ENCODE measurements at regions of chr2 and their contacts with region 1.

Region 1: DNA sequence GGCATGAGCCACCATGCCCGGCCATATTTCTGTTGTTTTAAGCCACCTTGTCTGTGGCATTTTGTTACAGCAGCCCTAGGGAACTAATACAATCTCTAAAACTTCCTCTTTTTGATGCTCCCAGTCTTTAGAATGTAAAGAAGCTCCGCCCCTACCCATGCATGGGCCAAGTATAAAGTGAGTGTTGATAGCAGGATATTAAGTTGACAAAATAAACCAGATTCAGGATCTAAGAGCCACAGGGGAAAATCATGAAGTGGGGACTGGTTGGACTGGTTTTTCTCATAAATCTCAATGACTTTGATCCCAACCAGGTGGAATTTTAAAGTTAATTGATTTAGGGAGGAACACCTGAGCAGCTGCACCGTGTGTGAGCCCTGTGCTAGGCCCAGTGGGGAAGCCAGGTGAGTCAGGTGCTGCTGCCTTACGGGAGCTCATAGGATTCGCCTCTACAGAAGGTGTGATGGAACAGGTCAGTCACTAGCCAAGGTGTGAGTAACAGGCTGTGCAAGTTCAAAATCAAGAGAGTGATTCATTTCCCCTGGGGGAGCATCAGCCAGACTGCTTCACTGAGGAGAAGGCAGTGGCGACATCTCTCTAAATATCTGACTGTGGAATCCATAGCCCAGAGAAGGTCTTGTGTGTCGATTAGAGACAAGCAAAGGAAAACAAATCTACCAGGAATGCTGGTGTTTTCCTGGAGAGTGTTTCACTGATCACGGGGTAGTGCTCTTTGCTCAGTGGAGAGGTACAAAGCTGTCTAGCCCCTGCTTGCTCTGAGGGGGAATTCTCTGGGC is 63.0 kb upstream of the MSH2 start:
- DNase-seq: peak; percentile 81 to 100
- H3K4me3 ChIP-seq: peak overlapping the region; percentile 33; the same call in 1 of the 2 replicates
- H3K27ac ChIP-seq: peak overlapping the region; percentile 84
- H3K4me1 ChIP-seq: peaks cover 56% of the 10 kb centered on the region
- H3K27me3 ChIP-seq: no peaks in the 10 kb centered on the region
- CTCF ChIP-seq: no peak

Region 2: DNA sequence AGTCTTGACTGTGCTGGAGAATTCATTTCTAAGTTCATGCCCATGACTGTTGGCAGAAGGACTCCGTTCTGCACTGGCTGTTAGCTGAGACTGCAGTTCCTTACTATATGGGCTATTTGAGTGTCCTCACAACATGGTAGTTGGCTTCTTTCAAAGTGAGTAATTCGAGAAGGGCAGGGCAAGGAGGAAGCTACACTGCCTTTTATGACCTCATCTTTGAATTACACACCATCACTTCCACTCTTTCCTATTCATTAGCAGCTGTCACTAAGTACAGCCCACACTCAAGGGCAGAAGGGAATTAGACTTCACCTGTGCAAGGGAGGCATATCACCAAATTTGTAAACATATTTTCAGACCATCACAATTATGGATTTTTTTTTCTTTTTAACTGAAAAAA is 1098.6 kb before region 1 on chr2:
- CTCF ChIA-PET with region 1: no interaction called
- POLR2A ChIA-PET with region 1: no interaction called
- intact Hi-C with region 1: no loop called
- DNase-seq: peak in 1 of 2 experiments; percentile 62
- H3K4me3 ChIP-seq: no peak overlapping the region
- H3K27ac ChIP-seq: no peak overlapping the region
- H3K4me1 ChIP-seq: peaks cover 14% of the 10 kb centered on the region
- H3K27me3 ChIP-seq: no peaks in the 10 kb centered on the region
- CTCF ChIP-seq: no peak

Region 3: GRCh38 chr2:47558768-47559684 is 219.1 kb after region 1 on chr2:
- CTCF ChIA-PET with region 1: no interaction called
- POLR2A ChIA-PET with region 1: no interaction called
- intact Hi-C with region 1: no loop called
- DNase-seq: no peak
- H3K4me3 ChIP-seq: no peak overlapping the region
- H3K27ac ChIP-seq: no peak overlapping the region
- H3K4me1 ChIP-seq: peaks cover 7% of the 10 kb centered on the region; the same call in 1 of the 2 replicates
- H3K27me3 ChIP-seq: no peaks in the 10 kb centered on the region
- CTCF ChIP-seq: no peak

Region 4: GRCh38 chr2:48107326-48107925 is 767.5 kb after region 1 on chr2:
- CTCF ChIA-PET with region 1: no interaction called
- POLR2A ChIA-PET with region 1: no interaction called
- intact Hi-C with region 1: loop called (anchors 10 kb)
- DNase-seq: peak; percentile 64 to 73
- H3K4me3 ChIP-seq: no peak overlapping the region
- H3K27ac ChIP-seq: peak overlapping the region; percentile 71
- H3K4me1 ChIP-seq: peaks cover 53% of the 10 kb centered on the region
- H3K27me3 ChIP-seq: no peaks in the 10 kb centered on the region
- CTCF ChIP-seq: no peak

Region 5: GRCh38 chr2:48383046-48383445 is 1043.1 kb after region 1 on chr2:
- CTCF ChIA-PET with region 1: no interaction called
- POLR2A ChIA-PET with region 1: interaction called, 20 read pairs
- intact Hi-C with region 1: no loop called
- DNase-seq: no peak
- H3K4me3 ChIP-seq: no peak overlapping the region
- H3K27ac ChIP-seq: no peak overlapping the region
- H3K4me1 ChIP-seq: no peaks in the 10 kb centered on the region
- H3K27me3 ChIP-seq: no peaks in the 10 kb centered on the region
- CTCF ChIP-seq: no peak